H1 (cell line): ENCODE measurements at regions of chr3 and their contacts with region 1.

Region 1: GRCh38 chr3:129809297-129809696 is 84.2 kb downstream of the TMCC1 start:
- DNase-seq: no peak
- H3K4me3 ChIP-seq: no peak overlapping the region
- H3K27ac ChIP-seq: no peak overlapping the region
- H3K4me1 ChIP-seq: no peaks in the 10 kb centered on the region
- H3K27me3 ChIP-seq: no peaks in the 10 kb centered on the region
- CTCF ChIP-seq: no peak
- EP300 ChIP-seq: no peak
- POLR2A ChIP-seq: no peak
- RAD21 ChIP-seq: no peak

Region 2: DNA sequence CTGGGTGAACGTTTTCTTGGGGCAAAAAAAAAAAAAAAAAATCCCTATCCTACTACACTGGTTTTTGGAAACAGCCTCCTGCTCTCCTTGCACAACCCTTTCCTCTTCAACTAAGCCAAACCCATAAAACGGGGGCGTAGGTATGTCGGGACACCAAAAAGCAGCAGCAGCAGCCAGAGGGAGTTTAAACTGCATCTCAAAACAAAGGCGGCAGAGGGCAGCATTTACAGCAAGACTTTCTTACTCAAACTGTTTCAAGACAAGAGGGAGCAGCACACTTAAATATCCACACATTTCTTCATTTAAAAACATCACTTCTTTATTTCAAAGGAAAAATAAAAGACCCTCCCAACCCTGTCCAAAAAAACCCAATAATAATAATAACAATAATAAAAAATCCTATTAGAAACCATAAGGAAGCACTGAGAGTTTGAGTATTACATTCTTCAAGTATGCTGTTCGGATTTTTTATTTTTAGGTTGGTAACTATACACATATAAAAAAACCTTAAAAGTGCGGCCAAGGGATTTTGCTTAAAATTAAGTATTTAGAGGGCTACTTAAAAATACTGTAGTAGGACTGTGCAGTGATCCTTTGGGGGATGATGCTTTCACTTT is 158.9 kb before region 1 on chr3:
- CTCF ChIA-PET with region 1: interaction called, 10 read pairs
- POLR2A ChIA-PET with region 1: no interaction called
- DNase-seq: peak in 1 of 2 experiments; percentile 84
- H3K4me3 ChIP-seq: no peak overlapping the region
- H3K27ac ChIP-seq: no peak overlapping the region
- H3K4me1 ChIP-seq: peaks cover 0 to 4% (median 2%) of the 10 kb centered on the region in 4 experiments; a peak in 3 of 7 replicates
- H3K27me3 ChIP-seq: no peaks in the 10 kb centered on the region
- CTCF ChIP-seq: peak; percentile 39 to 91 (median 75)
- EP300 ChIP-seq: no peak
- POLR2A ChIP-seq: no peak
- RAD21 ChIP-seq: peak; percentile 89 to 94

Region 3: GRCh38 chr3:129794311-129795185 is 14.7 kb before region 1 on chr3:
- CTCF ChIA-PET with region 1: interaction called, 10 read pairs
- POLR2A ChIA-PET with region 1: no interaction called
- DNase-seq: peak; percentile 63 to 83
- H3K4me3 ChIP-seq: peak overlapping the region; percentile 17 to 52 (median 44); a peak in 7 of 8 replicates
- H3K27ac ChIP-seq: 0 out of 2 replicates have a peak overlapping the region, but pooled peaks have one; percentile 47
- H3K4me1 ChIP-seq: peaks cover 4 to 18% (median 10%) of the 10 kb centered on the region in 4 experiments
- H3K27me3 ChIP-seq: no peaks in the 10 kb centered on the region
- CTCF ChIP-seq: no peak
- EP300 ChIP-seq: no peak
- POLR2A ChIP-seq: 0 out of 3 replicates have a peak, but pooled peaks of 1 of the 2 experiments have one; percentile 19
- RAD21 ChIP-seq: no peak

Region 4: GRCh38 chr3:129824926-129825541 is 15.7 kb after region 1 on chr3:
- CTCF ChIA-PET with region 1: interaction called, 22 read pairs
- POLR2A ChIA-PET with region 1: no interaction called
- DNase-seq: peak in 1 of 2 experiments; percentile 61
- H3K4me3 ChIP-seq: no peak overlapping the region
- H3K27ac ChIP-seq: no peak overlapping the region
- H3K4me1 ChIP-seq: no peaks in the 10 kb centered on the region
- H3K27me3 ChIP-seq: no peaks in the 10 kb centered on the region
- CTCF ChIP-seq: peak; percentile 46 to 74 (median 73)
- EP300 ChIP-seq: no peak
- POLR2A ChIP-seq: no peak
- RAD21 ChIP-seq: peak; percentile 89 to 91

Region 5: DNA sequence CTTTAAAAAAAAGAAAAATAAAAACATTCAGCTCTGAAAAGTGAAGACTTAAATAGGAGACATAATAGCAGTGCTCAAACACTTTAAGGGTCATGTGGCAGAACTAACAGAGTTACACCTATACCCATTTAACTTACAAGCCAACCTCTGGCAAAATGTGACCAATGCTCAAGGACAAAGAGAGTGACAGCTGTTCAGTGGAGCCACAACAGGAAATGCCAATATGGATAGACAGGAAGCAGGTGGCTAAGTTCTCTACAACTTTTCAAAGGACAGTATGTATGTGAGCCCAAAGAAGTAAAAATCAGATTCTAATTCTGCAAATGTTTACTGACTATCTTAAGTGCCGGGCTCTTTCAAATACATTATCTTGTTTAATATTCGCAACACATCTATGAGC is 80.8 kb after region 1 on chr3:
- CTCF ChIA-PET with region 1: no interaction called
- POLR2A ChIA-PET with region 1: no interaction called
- DNase-seq: no peak
- H3K4me3 ChIP-seq: no peak overlapping the region
- H3K27ac ChIP-seq: no peak overlapping the region
- H3K4me1 ChIP-seq: peaks cover 0 to 4% (median 2%) of the 10 kb centered on the region in 4 experiments; a peak in 3 of 7 replicates
- H3K27me3 ChIP-seq: no peaks in the 10 kb centered on the region
- CTCF ChIP-seq: no peak
- EP300 ChIP-seq: no peak
- POLR2A ChIP-seq: no peak
- RAD21 ChIP-seq: no peak